ENCODE measurements at regions of chr11 and their contacts with region 1.

Region 1: DNA sequence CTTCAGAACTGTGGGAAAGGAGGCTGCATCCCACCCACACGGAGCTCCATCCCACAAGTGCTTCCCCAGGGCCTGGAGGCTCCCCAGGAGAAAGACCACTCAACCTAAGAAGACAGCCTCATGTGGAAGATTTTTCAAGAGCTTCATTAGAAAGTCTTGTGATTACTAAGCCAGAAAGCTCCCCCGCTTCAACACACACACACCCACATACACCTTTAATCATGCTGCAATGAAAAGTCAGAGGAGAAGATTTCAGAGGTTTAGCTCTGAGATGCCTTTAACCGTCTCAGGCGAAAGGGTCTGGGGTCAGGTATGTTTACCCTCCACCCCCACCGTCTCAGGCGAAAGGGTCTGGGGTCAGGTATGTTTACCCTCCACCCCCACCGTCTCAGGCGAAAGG is 634.5 kb upstream of the B3GAT1 start:
- DNase-seq: no peak
- H3K4me3 ChIP-seq: no peak overlapping the region
- H3K27ac ChIP-seq: no peak overlapping the region
- H3K4me1 ChIP-seq: peaks cover 0 to 3% of the 10 kb centered on the region in 2 experiments; a peak in 1 of 4 replicates
- H3K27me3 ChIP-seq: no peaks in the 10 kb centered on the region
- CTCF ChIP-seq: no peak
- EP300 ChIP-seq: no peak
- RAD21 ChIP-seq: no peak

Region 2: DNA sequence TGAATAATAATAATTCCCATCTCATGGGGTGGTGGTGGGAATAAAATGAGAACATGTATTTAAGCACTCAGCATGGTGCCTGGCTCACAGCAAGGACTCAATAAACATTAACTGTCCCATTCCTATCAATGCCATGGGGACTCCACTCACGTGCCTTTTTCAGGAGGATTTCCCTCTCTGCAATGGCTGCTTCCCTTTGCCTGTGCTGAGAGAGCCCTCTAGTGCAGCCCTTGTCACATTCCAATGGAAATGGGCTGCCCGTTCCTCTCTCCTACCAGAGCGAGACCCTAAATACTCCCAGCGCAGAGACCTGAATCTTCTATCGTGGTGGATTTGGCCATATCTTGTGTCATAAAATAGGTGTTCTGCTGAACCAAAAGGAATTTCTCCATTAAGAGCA is 13.0 kb before region 1 on chr11:
- CTCF ChIA-PET with region 1: interaction called, 10 read pairs
- POLR2A ChIA-PET with region 1: no interaction called
- DNase-seq: peak; percentile 54
- H3K4me3 ChIP-seq: no peak overlapping the region; a peak in 1 of 4 replicates
- H3K27ac ChIP-seq: no peak overlapping the region
- H3K4me1 ChIP-seq: peaks cover 0 to 15% of the 10 kb centered on the region in 2 experiments; a peak in 1 of 4 replicates
- H3K27me3 ChIP-seq: no peaks in the 10 kb centered on the region
- CTCF ChIP-seq: no peak
- EP300 ChIP-seq: no peak
- RAD21 ChIP-seq: peak; percentile 88

Region 3: DNA sequence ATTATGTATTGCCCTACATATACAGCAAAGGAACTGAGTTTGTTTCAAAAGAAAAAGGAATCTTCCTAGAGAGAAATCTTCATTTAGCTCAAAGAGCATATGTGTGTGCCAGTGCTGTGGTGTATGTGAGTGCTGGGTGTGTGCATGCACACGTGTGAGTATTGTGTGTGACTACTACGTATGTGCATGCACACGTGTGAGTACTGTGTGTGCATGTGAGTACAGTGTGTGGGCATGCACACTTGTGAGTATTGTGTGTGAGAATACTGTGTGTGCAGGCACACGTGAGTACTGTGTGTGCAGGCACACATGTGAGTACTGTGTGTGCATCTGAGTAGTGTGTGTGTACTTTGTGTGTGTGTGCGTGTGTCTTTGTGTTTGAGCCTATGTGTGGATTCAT is 16.4 kb after region 1 on chr11:
- CTCF ChIA-PET with region 1: no interaction called
- POLR2A ChIA-PET with region 1: no interaction called
- DNase-seq: no peak
- H3K4me3 ChIP-seq: no peak overlapping the region
- H3K27ac ChIP-seq: no peak overlapping the region
- H3K4me1 ChIP-seq: peaks cover 0 to 2% of the 10 kb centered on the region in 2 experiments; a peak in 1 of 4 replicates
- H3K27me3 ChIP-seq: no peaks in the 10 kb centered on the region
- CTCF ChIP-seq: no peak
- EP300 ChIP-seq: no peak
- RAD21 ChIP-seq: no peak